CD4-positive, alpha-beta memory T cell (primary cell): ENCODE measurements at regions of chr9 and their contacts with region 1.

Region 1: GRCh38 chr9:99819856-99820684 is 1.6 kb upstream of the NR4A3 start:
- DNase-seq: peak; percentile 94 to 96 (median 95)
- H3K4me3 ChIP-seq: peak overlapping the region; percentile 82 to 83
- H3K4me3 Mint-ChIP-seq: peak overlapping the region; percentile 90 to 100 (median 97)
- H3K27ac ChIP-seq: peak overlapping the region; percentile 93
- H3K27ac Mint-ChIP-seq: peak overlapping the region; percentile 100
- H3K4me1 ChIP-seq: peaks cover 41% of the 10 kb centered on the region
- H3K4me1 Mint-ChIP-seq: peaks cover 29 to 67% (median 44%) of the 10 kb centered on the region in 4 donors
- H3K27me3 ChIP-seq: peaks cover 21% of the 10 kb centered on the region
- H3K27me3 Mint-ChIP-seq: peaks cover 22 to 29% of the 10 kb centered on the region in 2 donors

Region 2: GRCh38 chr9:99112750-99113413 is 707.2 kb before region 1 on chr9:
- CTCF ChIA-PET with region 1: no interaction called
- POLR2A ChIA-PET with region 1: no interaction called
- intact Hi-C with region 1: loop called (anchors 1 kb)
- DNase-seq: peak; percentile 79 to 85 (median 80)
- H3K4me3 ChIP-seq: peak overlapping the region in 1 of 2 donors; percentile 35
- H3K4me3 Mint-ChIP-seq: peak overlapping the region; percentile 37 to 85 (median 72)
- H3K27ac ChIP-seq: peak overlapping the region; percentile 27
- H3K27ac Mint-ChIP-seq: peak overlapping the region; percentile 60 to 90 (median 79)
- H3K4me1 ChIP-seq: peaks cover 94% of the 10 kb centered on the region
- H3K4me1 Mint-ChIP-seq: peaks cover 75 to 95% (median 83%) of the 10 kb centered on the region in 4 donors
- H3K27me3 ChIP-seq: no peaks in the 10 kb centered on the region
- H3K27me3 Mint-ChIP-seq: no peaks in the 10 kb centered on the region

Region 3: DNA sequence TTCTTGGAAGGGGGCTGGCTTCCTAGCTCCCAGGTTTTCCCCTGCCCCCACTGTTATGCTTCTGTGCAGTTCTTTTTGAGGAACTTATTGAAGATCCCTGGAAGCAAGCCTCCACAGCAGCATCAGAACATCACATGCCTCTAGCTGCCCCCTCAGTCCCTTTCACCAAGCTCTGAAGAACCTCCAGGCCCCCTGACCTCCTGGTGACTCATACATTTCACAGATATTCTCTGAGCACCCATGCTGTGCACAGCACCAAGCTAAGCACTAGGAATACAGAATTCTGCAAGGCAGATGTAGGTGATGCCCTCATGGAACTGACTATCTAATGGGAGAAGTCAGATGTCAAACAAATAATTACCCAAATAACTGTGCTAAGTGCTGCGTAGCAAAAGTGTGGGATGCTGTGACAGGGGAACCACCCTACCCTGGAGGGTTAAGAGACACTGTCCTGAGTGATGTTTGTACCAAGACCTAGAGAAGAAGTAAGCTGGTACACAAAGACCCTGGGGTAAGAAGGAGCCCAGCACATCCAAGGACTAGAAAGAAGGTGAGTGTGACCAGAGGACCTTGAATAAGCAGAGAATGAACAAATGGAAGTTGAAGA is 212.1 kb before region 1 on chr9:
- CTCF ChIA-PET with region 1: no interaction called
- POLR2A ChIA-PET with region 1: no interaction called
- intact Hi-C with region 1: no loop called
- DNase-seq: no peak
- H3K4me3 ChIP-seq: no peak overlapping the region
- H3K4me3 Mint-ChIP-seq: no peak overlapping the region
- H3K27ac ChIP-seq: no peak overlapping the region
- H3K27ac Mint-ChIP-seq: no peak overlapping the region
- H3K4me1 ChIP-seq: no peaks in the 10 kb centered on the region
- H3K4me1 Mint-ChIP-seq: no peaks in the 10 kb centered on the region
- H3K27me3 ChIP-seq: no peaks in the 10 kb centered on the region
- H3K27me3 Mint-ChIP-seq: peaks cover 14 to 26% of the 10 kb centered on the region in 2 donors

Region 4: DNA sequence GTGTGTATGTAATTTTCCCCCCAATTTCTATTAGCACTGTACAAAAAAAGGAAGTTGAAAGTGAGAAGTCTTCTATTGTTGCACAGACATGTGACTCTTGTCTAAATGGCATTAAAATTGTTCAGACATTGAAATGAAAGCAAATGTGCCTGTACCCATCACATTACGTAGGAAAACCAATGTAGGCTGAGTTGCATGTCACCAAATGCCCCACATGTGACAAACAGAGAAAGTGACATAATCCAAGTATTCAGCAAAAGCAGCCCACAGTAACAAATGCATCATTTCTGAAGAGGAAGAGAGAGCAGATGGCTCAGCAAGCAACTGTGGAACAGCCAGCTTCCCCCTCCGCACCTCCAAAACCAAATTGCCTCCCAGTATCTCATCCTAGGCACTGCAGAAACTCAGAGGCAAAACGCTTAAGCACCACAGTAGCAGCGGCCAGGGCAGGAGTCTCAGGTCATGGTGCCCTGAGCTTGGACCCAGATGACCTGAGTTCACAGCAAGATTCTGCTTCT is 159.8 kb before region 1 on chr9:
- CTCF ChIA-PET with region 1: no interaction called
- POLR2A ChIA-PET with region 1: no interaction called
- intact Hi-C with region 1: no loop called
- DNase-seq: no peak
- H3K4me3 ChIP-seq: no peak overlapping the region
- H3K4me3 Mint-ChIP-seq: no peak overlapping the region
- H3K27ac ChIP-seq: no peak overlapping the region
- H3K27ac Mint-ChIP-seq: no peak overlapping the region
- H3K4me1 ChIP-seq: no peaks in the 10 kb centered on the region
- H3K4me1 Mint-ChIP-seq: no peaks in the 10 kb centered on the region
- H3K27me3 ChIP-seq: no peaks in the 10 kb centered on the region
- H3K27me3 Mint-ChIP-seq: peaks cover 4 to 6% of the 10 kb centered on the region in 2 donors

Region 5: GRCh38 chr9:99807276-99807852 is 12.7 kb before region 1 on chr9:
- CTCF ChIA-PET with region 1: interaction called, 13 read pairs
- POLR2A ChIA-PET with region 1: interaction called, 5 read pairs
- intact Hi-C with region 1: loop called (anchors 1 kb)
- DNase-seq: peak; percentile 67 to 78 (median 72)
- H3K4me3 ChIP-seq: no peak overlapping the region
- H3K4me3 Mint-ChIP-seq: no peak overlapping the region
- H3K27ac ChIP-seq: no peak overlapping the region
- H3K27ac Mint-ChIP-seq: peak overlapping the region in 6 of 7 donors; percentile 14 to 67 (median 38)
- H3K4me1 ChIP-seq: no peaks in the 10 kb centered on the region
- H3K4me1 Mint-ChIP-seq: peaks cover 0 to 6% (median 5%) of the 10 kb centered on the region in 4 donors
- H3K27me3 ChIP-seq: no peaks in the 10 kb centered on the region
- H3K27me3 Mint-ChIP-seq: peaks cover 5 to 8% of the 10 kb centered on the region in 2 donors

Region 6: DNA sequence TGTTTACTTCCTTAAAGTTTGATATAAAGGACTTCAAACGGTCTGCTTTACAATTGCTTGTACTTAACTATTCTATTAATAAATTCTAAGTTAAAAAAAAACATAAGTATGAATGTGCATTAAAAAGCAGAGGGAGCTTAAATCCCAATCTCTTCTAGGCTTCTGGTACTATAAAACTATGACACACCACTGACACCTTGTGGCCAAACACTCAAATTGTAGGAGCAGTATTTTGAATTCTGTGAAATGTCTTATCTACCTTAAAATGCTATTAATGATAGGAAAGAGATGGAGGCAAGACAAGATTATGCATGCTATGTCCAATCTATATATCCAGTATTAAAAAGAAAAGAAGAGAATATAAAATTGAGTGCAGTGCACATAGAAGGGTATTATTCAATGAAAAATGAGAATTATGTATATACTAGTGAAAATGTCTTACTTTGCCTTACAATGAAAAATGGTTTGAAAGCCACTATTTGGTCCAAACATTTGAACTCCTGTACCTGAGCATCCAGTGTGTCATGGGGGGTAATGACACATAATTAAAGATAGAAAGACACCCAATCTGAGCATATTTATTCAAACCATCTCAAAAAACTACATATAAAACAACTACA is 191.1 kb after region 1 on chr9:
- CTCF ChIA-PET with region 1: interaction called, 3 read pairs
- POLR2A ChIA-PET with region 1: no interaction called
- intact Hi-C with region 1: loop called (anchors 5 kb)
- DNase-seq: peak; percentile 35 to 56 (median 43)
- H3K4me3 ChIP-seq: no peak overlapping the region
- H3K4me3 Mint-ChIP-seq: no peak overlapping the region
- H3K27ac ChIP-seq: no peak overlapping the region
- H3K27ac Mint-ChIP-seq: no peak overlapping the region
- H3K4me1 ChIP-seq: no peaks in the 10 kb centered on the region
- H3K4me1 Mint-ChIP-seq: peaks cover 0 to 4% (median under 1%) of the 10 kb centered on the region in 4 donors
- H3K27me3 ChIP-seq: no peaks in the 10 kb centered on the region
- H3K27me3 Mint-ChIP-seq: no peaks in the 10 kb centered on the region

Region 7: GRCh38 chr9:100352727-100353505 is 532.8 kb after region 1 on chr9 and contains the start of gene TEX10:
- CTCF ChIA-PET with region 1: no interaction called
- POLR2A ChIA-PET with region 1: interaction called, 4 read pairs
- intact Hi-C with region 1: loop called (anchors 5 kb)
- DNase-seq: peak; percentile 84 to 86 (median 85)
- H3K4me3 ChIP-seq: peak within 1 kb of the TSS; percentile 78 to 85
- H3K4me3 Mint-ChIP-seq: peak within 1 kb of the TSS; percentile 77 to 97 (median 96)
- H3K27ac ChIP-seq: peak within 1 kb of the TSS; percentile 78
- H3K27ac Mint-ChIP-seq: peak within 1 kb of the TSS; percentile 34 to 94 (median 89)
- H3K4me1 ChIP-seq: peaks cover 38% of the 10 kb centered on the region
- H3K4me1 Mint-ChIP-seq: peaks cover 35 to 56% (median 43%) of the 10 kb centered on the region in 4 donors
- H3K27me3 ChIP-seq: no peaks in the 10 kb centered on the region
- H3K27me3 Mint-ChIP-seq: no peaks in the 10 kb centered on the region
- total RNA-seq, gene TEX10: 22.4 to 22.8 TPM

Region 8: GRCh38 chr9:101398068-101398929 is 1578.2 kb after region 1 on chr9 and contains the starts of genes MRPL50 and ZNF189:
- CTCF ChIA-PET with region 1: no interaction called
- POLR2A ChIA-PET with region 1: no interaction called
- intact Hi-C with region 1: loop called (anchors 2 kb)
- DNase-seq: peak; percentile 95 to 100 (median 97)
- H3K4me3 ChIP-seq: peak within 1 kb of the TSS; percentile 75 to 86
- H3K4me3 Mint-ChIP-seq: peak within 1 kb of the TSS; percentile 98 to 100 (median 99)
- H3K27ac ChIP-seq: peak within 1 kb of the TSS; percentile 93
- H3K27ac Mint-ChIP-seq: peak within 1 kb of the TSS; percentile 98 to 100 (median 99)
- H3K4me1 ChIP-seq: peaks cover 64% of the 10 kb centered on the region
- H3K4me1 Mint-ChIP-seq: peaks cover 61 to 87% (median 78%) of the 10 kb centered on the region in 4 donors
- H3K27me3 ChIP-seq: no peaks in the 10 kb centered on the region
- H3K27me3 Mint-ChIP-seq: no peaks in the 10 kb centered on the region
- total RNA-seq, gene MRPL50: 20.9 to 23.0 TPM
- total RNA-seq, gene ZNF189: 22.1 to 23.2 TPM